ENCODE measurements at regions of chr5 and their contacts with region 1.

Region 1: GRCh38 chr5:149268928-149269557 is 2.6 kb upstream of the AFAP1L1 start:
- DNase-seq: peak; percentile 79
- CTCF ChIP-seq: peak; percentile 46

Region 2: GRCh38 chr5:148011401-148012132 is 1257.5 kb before region 1 on chr5:
- in situ Hi-C with region 1: no loop called
- DNase-seq: no peak
- CTCF ChIP-seq: no peak

Region 3: GRCh38 chr5:149094981-149095380 is 174.1 kb before region 1 on chr5:
- in situ Hi-C with region 1: no loop called
- DNase-seq: no peak
- CTCF ChIP-seq: no peak

Region 4: DNA sequence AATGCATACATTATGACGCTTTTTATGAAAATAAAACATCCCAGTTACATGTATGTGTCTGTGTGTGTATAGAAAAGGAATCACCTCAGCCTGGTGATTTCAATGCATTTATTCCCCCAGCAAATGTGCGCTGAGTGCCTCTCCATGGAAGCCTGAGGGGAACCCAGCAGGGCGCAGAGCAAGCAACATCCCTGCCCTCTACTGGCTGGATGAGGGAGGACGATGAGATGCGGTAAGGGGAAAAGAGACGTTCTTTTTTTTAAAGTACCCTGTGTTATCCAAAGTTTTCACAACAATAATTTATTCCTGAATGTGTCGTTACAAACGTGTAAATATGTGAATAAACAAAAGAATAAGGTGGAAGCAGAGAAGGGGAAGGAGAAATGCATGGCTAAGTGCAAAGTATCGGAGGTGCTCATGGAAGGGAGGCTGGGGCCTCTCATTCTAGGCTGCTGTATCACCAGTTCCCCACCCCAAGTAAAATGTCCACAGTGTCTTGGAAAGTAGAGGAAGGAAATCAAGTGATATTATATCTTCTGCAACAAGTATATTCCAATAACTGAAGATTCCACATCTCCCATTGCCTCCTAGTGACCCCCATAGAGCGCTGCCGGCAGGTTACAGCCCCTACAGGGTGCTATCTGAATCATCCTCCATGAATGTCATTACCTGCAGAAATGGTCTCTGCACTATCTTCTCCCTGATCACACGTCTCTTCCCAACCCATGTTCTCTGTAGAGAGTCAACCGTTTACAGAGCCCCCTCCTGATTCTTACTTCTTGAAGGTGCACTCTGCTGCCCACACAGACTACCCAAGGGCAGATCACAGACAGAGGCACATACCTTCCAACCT is 140.8 kb before region 1 on chr5:
- in situ Hi-C with region 1: loop called (anchors 10 kb)
- DNase-seq: peak; percentile 44
- CTCF ChIP-seq: peak; percentile 57

Region 5: DNA sequence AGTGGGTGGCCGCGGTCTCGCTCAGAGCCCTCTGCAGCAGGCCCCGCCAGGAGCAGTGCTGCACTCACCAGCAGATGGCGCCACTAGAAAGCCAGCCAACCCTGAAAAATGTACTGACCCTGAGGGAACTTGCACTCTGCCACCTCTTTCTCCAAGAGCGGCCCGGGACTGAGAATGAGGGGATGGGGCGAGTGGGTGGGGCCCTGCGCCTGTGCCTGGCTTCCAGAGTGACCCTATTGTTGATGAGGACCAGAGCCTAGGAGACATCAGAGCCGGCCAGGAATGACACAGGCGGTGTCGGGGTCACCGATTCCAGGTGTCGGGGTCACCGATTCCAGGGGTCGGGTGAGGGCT is 112.9 kb after region 1 on chr5:
- in situ Hi-C with region 1: no loop called
- DNase-seq: peak; percentile 91
- CTCF ChIP-seq: peak; percentile 96